GM12878 (cell line): ENCODE measurements at regions of chr15 and their contacts with region 1.

Region 1: DNA sequence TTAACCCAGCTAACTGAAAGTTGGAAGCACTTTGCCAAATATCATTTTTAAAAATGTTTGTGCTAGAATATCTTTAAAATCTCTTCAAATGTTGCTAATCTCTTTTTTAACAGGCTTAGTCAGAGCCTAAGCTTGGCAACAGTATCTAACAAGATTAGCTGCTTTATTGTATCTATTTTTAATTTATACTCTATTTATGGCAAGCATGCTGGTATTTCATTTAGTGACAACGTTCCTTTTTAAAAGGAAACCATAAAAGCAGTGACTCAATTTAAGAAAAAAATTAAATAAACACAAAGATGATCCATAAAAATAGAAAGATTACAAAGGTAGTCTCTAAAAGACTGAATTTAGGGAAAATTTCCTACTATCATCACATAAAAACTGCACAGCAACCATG is 40.5 kb downstream of the SLC12A6 start:
- DNase-seq: no peak
- ATAC-seq: no peak
- H3K4me3 ChIP-seq: no peak overlapping the region
- H3K27ac ChIP-seq: peak overlapping the region; percentile 22; the same call in 1 of the 2 replicates
- H3K4me1 ChIP-seq: peaks cover 4% of the 10 kb centered on the region
- H3K27me3 ChIP-seq: no peaks in the 10 kb centered on the region
- CTCF ChIP-seq: no peak
- EP300 ChIP-seq: no peak
- POLR2A ChIP-seq: no peak
- RAD21 ChIP-seq: no peak

Region 2: GRCh38 chr15:34284937-34285336 is 12.1 kb before region 1 on chr15:
- CTCF ChIA-PET with region 1: no interaction called
- POLR2A ChIA-PET with region 1: interaction called, 4 read pairs
- RAD21 ChIA-PET with region 1: interaction called, 3 read pairs
- SMC1A ChIA-PET with region 1: interaction called, 22 read pairs
- in situ Hi-C with region 1: no loop called
- intact Hi-C with region 1: no loop called
- DNase-seq: no peak
- ATAC-seq: no peak
- H3K4me3 ChIP-seq: no peak overlapping the region
- H3K27ac ChIP-seq: no peak overlapping the region
- H3K4me1 ChIP-seq: no peaks in the 10 kb centered on the region
- H3K27me3 ChIP-seq: no peaks in the 10 kb centered on the region
- CTCF ChIP-seq: no peak
- EP300 ChIP-seq: no peak
- POLR2A ChIP-seq: no peak
- RAD21 ChIP-seq: no peak

Region 3: GRCh38 chr15:34737477-34737876 is 440.4 kb after region 1 on chr15:
- CTCF ChIA-PET with region 1: no interaction called
- POLR2A ChIA-PET with region 1: no interaction called
- RAD21 ChIA-PET with region 1: no interaction called
- SMC1A ChIA-PET with region 1: no interaction called
- in situ Hi-C with region 1: no loop called
- intact Hi-C with region 1: no loop called
- DNase-seq: no peak
- ATAC-seq: no peak
- H3K4me3 ChIP-seq: no peak overlapping the region
- H3K27ac ChIP-seq: no peak overlapping the region
- H3K4me1 ChIP-seq: no peaks in the 10 kb centered on the region
- H3K27me3 ChIP-seq: peaks cover 0 to 3% of the 10 kb centered on the region in 2 experiments; a peak in 1 of 4 replicates
- CTCF ChIP-seq: no peak
- EP300 ChIP-seq: no peak
- POLR2A ChIP-seq: no peak
- RAD21 ChIP-seq: no peak